ENCODE measurements at regions of chr7 and their contacts with region 1.

Region 1: GRCh38 chr7:74365322-74366022 is 76.3 kb downstream of the CLIP2 start:
- DNase-seq: peak in 1 of 2 experiments; percentile 87
- H3K4me3 ChIP-seq: no peak overlapping the region; a peak in 1 of 8 replicates
- H3K27ac ChIP-seq: no peak overlapping the region
- H3K4me1 ChIP-seq: peaks cover 0 to 3% (median 2%) of the 10 kb centered on the region in 4 experiments; a peak in 3 of 7 replicates
- H3K27me3 ChIP-seq: no peaks in the 10 kb centered on the region; a peak in 1 of 7 replicates
- CTCF ChIP-seq: no peak; a peak in 1 of 4 replicates
- EP300 ChIP-seq: no peak
- POLR2A ChIP-seq: 0 out of 3 replicates have a peak, but pooled peaks of 1 of the 2 experiments have one; percentile 46
- RAD21 ChIP-seq: no peak; a peak in 1 of 4 replicates

Region 2: DNA sequence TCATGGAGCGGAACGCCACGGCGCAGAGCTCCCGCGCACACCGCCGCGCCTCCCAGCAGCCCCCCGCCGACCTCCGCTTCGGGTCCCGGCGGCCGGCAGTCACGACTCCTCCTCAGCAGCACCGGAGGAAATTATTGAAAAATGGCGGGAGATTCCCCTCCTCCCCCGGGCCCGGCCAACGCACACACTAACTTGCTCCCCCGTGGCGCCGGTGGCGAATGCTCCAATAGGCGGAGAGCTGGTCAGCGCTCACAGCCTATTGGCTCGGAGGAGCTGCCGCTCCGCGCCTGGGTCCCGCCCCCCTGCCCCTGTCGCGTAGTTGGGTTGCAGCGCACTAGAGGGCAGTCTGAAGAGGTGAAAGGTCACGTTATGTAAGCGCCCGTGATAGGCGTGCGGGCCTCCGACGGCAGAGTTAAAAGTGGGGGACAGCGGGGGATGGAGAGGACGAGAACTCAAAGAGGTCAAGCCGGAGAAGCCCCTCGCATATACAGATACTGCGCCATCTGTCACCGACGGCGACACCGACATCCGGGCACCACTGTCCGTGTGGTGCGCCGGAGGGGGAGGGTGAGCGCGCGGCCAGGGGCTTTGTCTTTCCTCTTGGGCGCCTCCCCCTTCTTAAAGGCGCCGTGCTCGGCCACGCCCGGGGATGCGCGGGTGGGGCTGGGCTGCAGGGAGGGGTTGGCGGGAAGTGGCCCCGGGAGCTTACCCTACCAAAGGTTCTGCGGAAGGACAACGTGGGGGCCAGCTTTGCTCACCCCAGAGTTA is 843.2 kb before region 1 on chr7 and contains the start of gene BAZ1B:
- CTCF ChIA-PET with region 1: no interaction called
- POLR2A ChIA-PET with region 1: no interaction called
- DNase-seq: peak; percentile 92 to 98
- H3K4me3 ChIP-seq: peak within 1 kb of the TSS; percentile 79 to 91 (median 82)
- H3K27ac ChIP-seq: peak within 1 kb of the TSS; percentile 98
- H3K4me1 ChIP-seq: peaks cover 0 to 5% (median 2%) of the 10 kb centered on the region in 4 experiments; a peak in 2 of 7 replicates
- H3K27me3 ChIP-seq: no peaks in the 10 kb centered on the region
- CTCF ChIP-seq: no peak; a peak in 1 of 4 replicates
- EP300 ChIP-seq: no peak
- POLR2A ChIP-seq: peak; percentile 80 to 85
- RAD21 ChIP-seq: no peak; a peak in 1 of 4 replicates
- total RNA-seq, gene BAZ1B: 83.6 and 86.8 TPM in 2 replicates

Region 3: DNA sequence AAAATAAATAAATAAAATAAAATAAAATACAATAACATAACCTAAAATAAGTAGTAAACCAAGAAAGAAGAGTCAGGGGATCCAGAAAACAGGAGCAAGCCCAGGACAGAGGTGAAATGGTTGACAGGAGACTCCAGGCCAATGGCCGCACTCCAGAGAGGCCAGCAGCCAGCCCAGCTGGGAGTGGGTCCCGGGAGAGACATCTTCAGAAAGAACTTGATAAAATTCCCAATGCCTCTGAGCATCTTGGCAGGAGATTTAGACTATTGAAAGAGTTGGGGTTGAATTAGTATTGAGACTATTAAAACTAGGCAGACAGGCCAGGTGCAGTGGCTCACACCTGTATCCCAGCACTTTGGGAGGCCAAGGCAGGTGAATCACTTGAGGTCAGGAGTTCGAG is 13.6 kb before region 1 on chr7:
- CTCF ChIA-PET with region 1: interaction called, 11 read pairs
- POLR2A ChIA-PET with region 1: interaction called, 7 read pairs
- DNase-seq: no peak
- H3K4me3 ChIP-seq: no peak overlapping the region
- H3K27ac ChIP-seq: no peak overlapping the region
- H3K4me1 ChIP-seq: no peaks in the 10 kb centered on the region
- H3K27me3 ChIP-seq: no peaks in the 10 kb centered on the region
- CTCF ChIP-seq: no peak
- EP300 ChIP-seq: no peak
- POLR2A ChIP-seq: no peak
- RAD21 ChIP-seq: no peak